ENCODE measurements at regions of chr3 and their contacts with region 1.

Region 1: DNA sequence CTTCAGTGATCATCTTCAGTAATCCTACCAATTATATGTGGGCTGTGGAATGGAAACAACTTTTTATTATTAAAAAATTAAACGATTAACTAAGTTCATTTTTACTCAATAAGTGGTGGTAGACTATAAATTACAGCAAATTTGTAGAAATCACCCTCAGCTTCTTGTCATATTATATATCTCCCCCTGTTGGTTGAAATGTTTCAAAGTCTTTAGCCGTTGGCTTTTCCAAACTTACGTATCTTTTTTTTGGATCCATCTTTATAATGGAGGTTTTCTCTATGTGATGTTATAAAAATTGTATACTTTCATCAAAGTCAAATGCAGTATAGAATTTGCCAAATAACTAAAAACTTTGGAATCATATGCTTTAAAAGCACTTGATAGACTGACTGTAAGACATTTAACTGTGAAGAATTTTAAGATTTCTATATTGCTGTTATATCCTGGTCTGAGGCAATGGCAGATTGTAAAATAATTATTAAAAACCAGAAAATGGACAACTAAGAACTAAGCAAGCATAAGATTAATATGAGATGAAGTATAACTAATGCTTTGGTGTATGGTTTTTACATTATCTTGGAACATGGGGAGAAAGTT is 44.7 kb downstream of the ATP11B start:
- DNase-seq: peak in 1 of 2 experiments; percentile 42
- H3K4me3 ChIP-seq: no peak overlapping the region
- H3K27ac ChIP-seq: no peak overlapping the region
- H3K4me1 ChIP-seq: no peaks in the 10 kb centered on the region
- H3K27me3 ChIP-seq: no peaks in the 10 kb centered on the region
- CTCF ChIP-seq: peak; percentile 83

Region 2: DNA sequence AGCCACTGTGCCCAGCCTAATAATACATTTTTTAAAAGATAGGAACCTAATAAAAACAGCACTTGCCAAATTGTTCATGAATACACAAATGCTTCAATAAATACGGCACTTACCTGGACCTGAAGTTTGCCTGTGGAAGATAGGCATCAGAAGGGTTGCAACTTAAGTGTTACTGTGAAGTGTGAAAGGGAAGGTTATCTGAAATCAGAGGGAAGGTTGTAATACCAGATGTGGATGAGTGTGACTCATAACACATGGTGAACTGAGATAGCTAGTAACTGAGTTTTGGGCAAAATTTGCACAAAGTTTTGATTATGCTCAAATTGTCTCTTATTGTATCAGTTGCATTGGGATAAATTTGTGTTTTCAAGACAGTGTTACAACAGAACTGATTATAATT is 23.4 kb after region 1 on chr3:
- CTCF ChIA-PET with region 1: no interaction called
- POLR2A ChIA-PET with region 1: no interaction called
- intact Hi-C with region 1: loop called (anchors 1 kb)
- DNase-seq: no peak
- H3K4me3 ChIP-seq: no peak overlapping the region
- H3K27ac ChIP-seq: no peak overlapping the region
- H3K4me1 ChIP-seq: no peaks in the 10 kb centered on the region
- H3K27me3 ChIP-seq: no peaks in the 10 kb centered on the region
- CTCF ChIP-seq: no peak

Region 3: DNA sequence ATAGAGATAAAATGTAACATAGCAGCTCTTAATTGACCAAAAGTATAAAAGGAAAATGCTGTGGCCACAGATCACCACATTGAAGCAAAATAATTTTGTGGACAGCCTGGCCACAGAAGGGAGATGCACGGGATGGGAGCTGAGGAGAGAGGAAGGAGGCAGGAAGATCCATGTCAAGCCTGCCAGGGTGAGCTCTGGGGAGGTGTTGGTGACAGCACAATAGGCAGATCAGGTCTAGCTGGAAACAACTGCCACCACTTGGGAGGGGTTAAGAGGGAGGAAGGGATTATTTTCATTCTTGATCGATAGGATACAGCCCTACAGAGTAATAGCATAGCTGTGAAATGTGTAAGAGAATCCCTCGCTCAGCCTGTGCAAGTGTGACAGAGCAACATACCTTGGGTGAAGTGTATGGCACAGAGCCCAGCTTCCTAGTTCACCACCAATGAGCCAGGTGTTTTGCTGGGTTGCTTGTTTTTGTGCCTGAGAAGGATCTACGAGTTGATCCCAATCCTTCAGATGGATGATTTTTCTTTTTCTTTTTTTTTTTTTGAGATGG is 151.5 kb after region 1 on chr3:
- CTCF ChIA-PET with region 1: interaction called, 10 read pairs
- POLR2A ChIA-PET with region 1: no interaction called
- intact Hi-C with region 1: no loop called
- DNase-seq: peak; percentile 25 to 64
- H3K4me3 ChIP-seq: no peak overlapping the region
- H3K27ac ChIP-seq: no peak overlapping the region
- H3K4me1 ChIP-seq: no peaks in the 10 kb centered on the region
- H3K27me3 ChIP-seq: no peaks in the 10 kb centered on the region
- CTCF ChIP-seq: no peak

Measured in PC-9 (cell line).